PC-3 (cell line): ENCODE measurements at regions of chr1 and their contacts with region 1.

Region 1: DNA sequence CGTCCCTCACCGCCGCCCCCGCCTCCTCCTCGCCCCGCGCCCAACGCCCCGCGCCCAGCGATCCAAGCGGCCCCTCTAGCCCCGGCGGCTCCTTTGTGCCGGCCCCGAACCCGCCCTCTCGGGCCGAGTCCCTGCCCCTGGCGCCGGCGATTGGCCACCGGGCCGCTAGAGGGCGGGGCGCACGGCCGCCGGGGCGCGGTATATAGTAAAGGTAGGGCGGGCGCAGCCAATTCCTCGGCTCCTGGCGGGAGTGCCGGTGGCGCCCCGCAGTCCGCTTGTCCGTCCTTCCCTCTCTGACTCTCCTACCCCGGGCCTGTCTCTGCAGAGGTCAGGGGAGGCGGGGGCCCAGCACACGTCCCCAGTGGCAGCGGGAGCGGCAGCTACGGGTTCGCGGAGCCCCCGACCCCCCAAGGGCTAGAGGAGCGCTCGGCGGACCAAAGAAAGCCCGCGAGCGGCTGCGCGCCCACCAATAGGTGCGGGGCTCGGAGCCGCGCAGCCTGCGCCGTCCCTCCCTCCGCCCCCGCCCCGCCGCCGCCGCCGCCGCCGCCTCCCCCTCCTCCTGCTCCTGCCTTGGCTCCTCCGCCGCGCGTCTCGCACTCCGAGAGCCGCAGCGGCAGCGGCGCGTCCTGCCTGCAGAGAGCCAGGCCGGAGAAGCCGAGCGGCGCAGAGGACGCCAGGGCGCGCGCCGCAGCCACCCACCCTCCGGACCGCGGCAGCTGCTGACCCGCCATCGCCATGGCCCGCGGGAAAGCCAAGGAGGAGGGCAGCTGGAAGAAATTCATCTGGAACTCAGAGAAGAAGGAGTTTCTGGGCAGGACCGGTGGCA is at the start of gene ATP1B1:
- DNase-seq: peak; percentile 96
- ATAC-seq: peak; percentile 76
- H3K4me3 ChIP-seq: peak within 1 kb of the TSS; percentile 93
- H3K27ac ChIP-seq: peak within 1 kb of the TSS; percentile 64
- H3K4me1 ChIP-seq: peaks cover 52% of the 10 kb centered on the region
- H3K27me3 ChIP-seq: no peaks in the 10 kb centered on the region
- CTCF ChIP-seq: 0 out of 2 replicates have a peak, but pooled peaks have one; percentile 7
- total RNA-seq, gene ATP1B1: 68.7 and 76.6 TPM in 2 replicates

Region 2: DNA sequence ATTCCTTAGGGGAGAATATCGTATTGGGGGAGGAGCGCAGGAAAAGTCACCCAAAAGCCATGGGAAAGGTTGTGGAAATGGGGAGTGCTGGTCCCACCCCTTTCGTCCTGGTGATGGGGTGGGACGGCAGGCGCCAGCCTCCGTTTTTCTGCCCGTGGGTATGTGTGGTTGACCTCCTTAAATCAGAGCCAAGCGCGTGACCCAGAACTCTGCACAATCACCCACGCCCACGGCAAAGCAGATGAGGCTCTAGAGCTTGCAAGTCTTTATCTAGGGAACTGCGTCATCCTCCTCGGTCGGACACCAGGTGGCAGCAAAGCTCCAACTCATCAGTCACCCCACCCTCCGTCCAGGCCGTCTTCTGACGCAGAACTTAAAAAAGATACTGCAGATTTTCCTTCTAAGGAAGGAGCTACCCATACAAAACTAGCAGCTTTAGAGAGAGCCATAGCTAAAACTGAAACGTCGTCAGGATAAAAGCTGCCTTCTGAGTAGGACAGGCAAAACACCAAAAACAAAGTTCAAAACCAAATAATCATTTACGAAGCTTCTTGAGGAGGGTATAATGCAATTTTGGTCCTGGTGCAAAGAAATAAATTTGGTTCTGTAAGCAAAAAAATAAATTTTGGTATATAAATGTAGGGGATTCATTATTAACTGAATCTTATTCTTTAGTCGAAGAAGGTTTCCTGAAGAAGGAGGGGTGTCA is 763.6 kb before region 1 on chr1:
- CTCF ChIA-PET with region 1: no interaction called
- POLR2A ChIA-PET with region 1: no interaction called
- intact Hi-C with region 1: loop called (anchors 10 kb)
- DNase-seq: peak; percentile 92
- ATAC-seq: peak; percentile 96
- H3K4me3 ChIP-seq: peak overlapping the region; percentile 47
- H3K27ac ChIP-seq: no peak overlapping the region
- H3K4me1 ChIP-seq: peaks cover 12% of the 10 kb centered on the region; the same call in 1 of the 2 replicates
- H3K27me3 ChIP-seq: no peaks in the 10 kb centered on the region
- CTCF ChIP-seq: peak; percentile 70

Region 3: DNA sequence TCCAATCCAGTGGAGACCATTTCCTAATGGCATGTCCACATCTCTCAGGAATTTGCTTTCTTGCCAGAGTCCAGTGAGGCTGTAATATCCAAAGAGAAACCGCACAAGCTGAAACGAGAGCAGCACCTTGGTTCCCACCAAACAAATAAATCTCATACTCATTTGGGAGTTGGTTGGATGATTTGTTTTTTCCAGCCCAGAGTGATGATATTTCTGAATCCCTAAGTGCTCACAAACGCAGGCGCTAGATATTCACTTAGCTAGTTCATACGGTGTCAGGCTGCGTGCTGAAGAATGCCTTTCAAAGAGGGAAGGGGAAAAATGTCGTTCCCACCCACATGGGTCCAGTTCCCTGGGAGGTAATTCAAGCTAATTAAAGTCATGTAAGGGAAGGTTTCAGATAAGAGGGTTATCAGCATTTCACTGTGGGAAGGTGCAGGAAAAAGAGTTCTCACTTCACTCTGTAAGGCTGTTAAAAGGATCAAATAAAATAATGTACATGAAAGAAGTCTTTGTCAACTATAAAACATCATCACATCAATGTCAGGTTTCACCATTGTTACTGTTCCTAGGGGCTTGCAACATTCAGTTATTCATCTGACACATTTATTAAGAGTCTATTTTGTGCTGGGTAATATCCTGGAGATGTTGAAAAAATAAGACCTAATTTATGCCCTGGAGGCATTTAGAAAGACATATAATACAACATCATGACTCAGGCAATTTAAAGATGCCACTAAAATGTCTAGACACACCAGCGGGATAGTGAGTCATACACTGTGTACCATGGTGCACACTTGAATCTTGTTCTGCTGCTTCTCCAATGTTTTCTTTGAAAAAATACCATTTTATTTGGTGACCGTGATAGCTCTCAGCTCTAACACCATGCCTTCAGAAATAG is 396.7 kb before region 1 on chr1:
- CTCF ChIA-PET with region 1: no interaction called
- POLR2A ChIA-PET with region 1: no interaction called
- intact Hi-C with region 1: loop called (anchors 1 kb)
- DNase-seq: peak; percentile 99
- ATAC-seq: peak; percentile 83
- H3K4me3 ChIP-seq: peak overlapping the region; percentile 43
- H3K27ac ChIP-seq: peak overlapping the region; percentile 98
- H3K4me1 ChIP-seq: peaks cover 27% of the 10 kb centered on the region
- H3K27me3 ChIP-seq: no peaks in the 10 kb centered on the region
- CTCF ChIP-seq: no peak

Region 4: GRCh38 chr1:168920456-168921094 is 185.7 kb before region 1 on chr1:
- CTCF ChIA-PET with region 1: no interaction called
- POLR2A ChIA-PET with region 1: no interaction called
- intact Hi-C with region 1: loop called (anchors 1 kb)
- DNase-seq: peak; percentile 97
- ATAC-seq: peak; percentile 92
- H3K4me3 ChIP-seq: peak overlapping the region; percentile 29
- H3K27ac ChIP-seq: peak overlapping the region; percentile 99
- H3K4me1 ChIP-seq: peaks cover 60% of the 10 kb centered on the region
- H3K27me3 ChIP-seq: no peaks in the 10 kb centered on the region
- CTCF ChIP-seq: no peak

Region 5: DNA sequence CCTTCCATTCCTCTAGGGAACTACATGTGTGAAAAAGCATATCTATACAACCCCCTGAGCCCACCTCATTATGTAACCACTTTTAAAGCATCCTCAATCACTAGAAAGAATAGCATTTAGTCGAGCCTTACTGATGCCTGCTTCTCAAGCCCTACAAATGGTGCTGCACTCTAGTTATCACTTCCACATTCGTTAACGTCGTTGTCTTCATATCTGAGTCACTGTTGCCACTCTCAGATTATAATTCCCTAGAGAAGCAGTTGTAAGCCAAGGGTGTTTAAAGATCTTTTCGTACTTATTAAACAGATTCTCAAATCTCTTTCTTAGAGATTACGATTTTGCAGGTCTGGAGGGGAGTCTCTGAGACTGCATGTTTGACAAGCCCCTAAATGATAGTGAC is 16.7 kb after region 1 on chr1:
- CTCF ChIA-PET with region 1: no interaction called
- POLR2A ChIA-PET with region 1: no interaction called
- intact Hi-C with region 1: no loop called
- DNase-seq: no peak
- ATAC-seq: no peak
- H3K4me3 ChIP-seq: no peak overlapping the region
- H3K27ac ChIP-seq: no peak overlapping the region
- H3K4me1 ChIP-seq: peaks cover 36% of the 10 kb centered on the region
- H3K27me3 ChIP-seq: no peaks in the 10 kb centered on the region
- CTCF ChIP-seq: no peak

Region 6: DNA sequence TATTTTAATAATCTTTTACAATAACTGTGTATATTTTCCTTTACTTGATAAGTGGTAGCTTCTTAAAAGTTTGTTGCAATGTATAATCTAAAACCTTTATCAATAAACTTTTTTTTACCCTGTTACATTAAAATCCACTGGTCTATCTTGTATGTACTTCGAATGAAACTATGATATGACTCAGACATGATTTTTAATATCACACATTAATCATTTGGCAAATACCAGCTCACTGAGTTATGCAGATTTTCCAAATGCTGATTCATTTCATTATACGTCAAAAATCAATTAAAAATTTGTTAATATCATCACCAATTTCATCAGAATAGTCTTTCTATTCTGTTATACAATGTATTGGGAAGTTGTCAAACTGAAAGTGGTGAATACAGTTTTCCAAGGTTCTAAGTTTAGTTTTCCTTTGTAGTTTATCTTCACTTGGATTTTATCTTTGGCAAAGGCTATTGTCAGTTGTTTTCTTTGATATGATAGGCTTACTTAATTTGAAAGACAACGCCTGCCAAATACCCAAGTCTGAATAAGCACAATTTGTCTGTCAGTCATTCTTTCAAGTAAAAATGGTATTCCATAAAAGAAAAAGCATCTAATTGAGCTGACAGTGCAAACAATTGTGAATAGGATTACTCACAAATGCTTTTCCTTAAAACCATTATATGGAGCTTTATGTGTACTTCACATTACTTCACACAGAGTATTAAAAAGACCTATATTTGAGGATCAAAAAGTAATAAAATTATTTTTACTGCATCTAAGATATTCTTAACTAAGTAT is 134.3 kb after region 1 on chr1:
- CTCF ChIA-PET with region 1: no interaction called
- POLR2A ChIA-PET with region 1: no interaction called
- intact Hi-C with region 1: loop called (anchors 2 kb)
- DNase-seq: peak; percentile 72
- ATAC-seq: peak; percentile 88
- H3K4me3 ChIP-seq: peak overlapping the region; percentile 31
- H3K27ac ChIP-seq: peak overlapping the region; percentile 73
- H3K4me1 ChIP-seq: peaks cover 19% of the 10 kb centered on the region
- H3K27me3 ChIP-seq: no peaks in the 10 kb centered on the region
- CTCF ChIP-seq: no peak

Region 7: DNA sequence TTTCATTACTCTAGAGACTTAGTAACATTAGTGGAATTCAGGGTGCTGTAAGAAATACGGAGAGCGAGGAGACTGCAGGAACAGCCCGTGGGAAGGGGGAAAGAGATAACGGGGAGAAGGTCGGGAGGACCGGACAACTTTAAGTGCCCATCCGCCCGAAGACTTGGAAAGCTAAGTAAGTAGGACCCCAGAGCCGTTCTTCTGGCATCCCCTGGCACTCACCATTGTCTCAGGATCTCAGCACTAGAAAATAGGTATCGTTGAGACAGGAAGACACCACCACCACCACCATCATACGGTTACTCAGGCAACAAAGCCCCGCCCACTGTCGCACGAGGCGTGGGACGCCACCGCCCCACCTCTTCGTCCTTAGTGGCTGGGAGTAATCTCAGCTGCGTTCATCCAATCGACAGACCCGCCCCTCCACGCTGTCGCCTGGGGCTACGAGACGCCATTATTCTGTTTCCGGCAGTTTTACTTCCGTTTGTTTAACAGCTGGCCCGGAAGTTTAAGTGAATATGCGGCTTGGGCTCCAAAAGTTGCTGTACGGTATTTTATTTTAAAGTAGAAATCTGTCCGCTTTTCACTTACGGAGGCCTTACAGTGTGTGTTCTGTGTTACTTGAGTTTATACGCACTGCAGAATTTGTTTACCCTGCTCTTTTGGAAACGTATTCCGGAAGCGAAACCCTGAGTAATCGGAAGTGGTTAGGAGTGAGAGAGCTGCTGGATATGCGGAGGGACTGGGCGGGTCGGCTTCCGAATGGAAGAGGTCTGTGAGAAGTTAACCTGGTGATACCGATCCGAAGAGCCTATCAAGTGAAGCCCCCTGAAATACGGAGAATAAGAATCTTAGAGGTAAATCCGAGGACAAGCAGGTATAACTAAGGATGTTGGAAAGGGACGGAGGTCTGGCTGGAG is 261.4 kb after region 1 on chr1 and contains the starts of genes BLZF1 and NME7:
- CTCF ChIA-PET with region 1: no interaction called
- POLR2A ChIA-PET with region 1: no interaction called
- intact Hi-C with region 1: loop called (anchors 5 kb)
- DNase-seq: peak; percentile 100
- ATAC-seq: peak; percentile 90
- H3K4me3 ChIP-seq: peak within 1 kb of the TSS; percentile 92
- H3K27ac ChIP-seq: peak within 1 kb of the TSS; percentile 87
- H3K4me1 ChIP-seq: peaks cover 46% of the 10 kb centered on the region
- H3K27me3 ChIP-seq: no peaks in the 10 kb centered on the region
- CTCF ChIP-seq: no peak
- total RNA-seq, gene BLZF1: 30.6 and 37.4 TPM in 2 replicates
- total RNA-seq, gene NME7: 18.6 and 18.9 TPM in 2 replicates